Aorta (tissue), 5 donors: ENCODE measurements at regions of chr3 and their contacts with region 1.

Region 1: GRCh38 chr3:20039766-20040475 is at the start of gene KAT2B:
- DNase-seq: peak; percentile 88 to 92
- ATAC-seq: peak; percentile 89
- H3K4me3 ChIP-seq: peak within 1 kb of the TSS; percentile 72 to 91
- H3K27ac ChIP-seq: peak within 1 kb of the TSS; percentile 20 to 98
- H3K4me1 ChIP-seq: peaks cover 0 to 3% of the 10 kb centered on the region in 2 donors
- H3K27me3 ChIP-seq: no peaks in the 10 kb centered on the region
- total RNA-seq, gene KAT2B: 44.1 to 54.2 TPM

Region 2: DNA sequence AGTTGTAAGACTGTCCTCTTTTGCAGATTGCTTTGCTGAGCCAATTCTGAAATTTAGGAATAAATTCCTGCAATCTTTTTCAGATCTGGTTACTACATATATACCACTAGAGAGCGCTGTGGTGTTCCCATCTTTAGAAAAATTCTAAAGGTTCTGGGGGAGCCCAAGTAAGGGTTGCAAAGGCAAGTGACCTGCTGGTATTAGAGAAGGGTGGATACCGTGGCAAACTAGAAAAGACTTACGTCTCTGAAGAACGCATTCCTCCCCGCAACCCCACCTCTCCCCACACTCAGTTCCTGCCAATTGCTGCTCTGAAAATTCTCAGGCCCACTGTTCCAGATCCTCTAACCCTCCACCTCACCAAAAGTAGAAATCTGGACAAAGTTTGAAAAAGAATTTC is 154.5 kb before region 1 on chr3:
- intact Hi-C with region 1: loop called in 1 of 2 experiments (anchors 10 kb)
- DNase-seq: no peak
- ATAC-seq: no peak
- H3K4me3 ChIP-seq: no peak overlapping the region
- H3K27ac ChIP-seq: no peak overlapping the region
- H3K4me1 ChIP-seq: peaks cover 0 to 2% of the 10 kb centered on the region in 2 donors
- H3K27me3 ChIP-seq: no peaks in the 10 kb centered on the region

Region 3: DNA sequence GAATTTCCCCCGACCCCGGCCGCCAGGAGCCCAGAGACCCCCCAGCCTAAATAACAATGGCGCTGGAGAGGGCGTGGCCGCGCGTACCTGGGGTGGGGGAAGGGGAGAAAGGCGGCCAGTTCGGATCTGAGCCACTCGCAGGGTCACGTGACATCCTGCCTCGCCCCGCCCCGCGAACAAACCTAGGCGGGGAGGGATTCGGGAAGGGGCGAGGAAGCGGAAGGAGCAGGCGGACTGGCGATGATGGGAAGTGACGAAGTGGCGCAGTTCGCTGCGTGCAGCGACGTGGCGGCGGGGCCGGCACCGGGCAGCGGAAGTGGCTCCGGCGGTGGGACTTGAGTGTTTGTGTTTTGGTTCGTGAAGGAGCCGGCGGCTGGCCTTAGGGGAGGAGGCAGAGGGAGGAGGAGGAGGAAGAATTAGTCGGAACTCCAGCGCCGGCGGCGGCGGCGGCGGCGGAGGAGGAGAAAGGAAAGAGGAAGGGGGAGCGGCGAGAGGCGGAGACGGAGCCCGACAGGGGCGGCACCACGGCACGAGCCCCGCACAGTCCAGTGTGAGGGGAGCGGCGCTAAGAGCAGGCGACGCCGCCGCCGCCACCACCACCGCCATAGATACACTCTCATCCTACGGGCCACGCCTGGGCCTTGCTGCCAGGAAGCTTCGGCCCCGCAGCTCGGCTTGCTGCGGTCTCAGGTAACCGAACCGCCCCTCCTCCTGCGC is 92.9 kb before region 1 on chr3 and contains the start of gene RAB5A:
- intact Hi-C with region 1: loop called (anchors 2 to 10 kb)
- DNase-seq: peak; percentile 99
- ATAC-seq: peak; percentile 98
- H3K4me3 ChIP-seq: peak within 1 kb of the TSS; percentile 78 to 98
- H3K27ac ChIP-seq: peak within 1 kb of the TSS; percentile 83 to 98
- H3K4me1 ChIP-seq: peaks cover 2 to 4% of the 10 kb centered on the region in 2 donors
- H3K27me3 ChIP-seq: no peaks in the 10 kb centered on the region
- total RNA-seq, gene RAB5A: 75.9 to 80.3 TPM

Region 4: DNA sequence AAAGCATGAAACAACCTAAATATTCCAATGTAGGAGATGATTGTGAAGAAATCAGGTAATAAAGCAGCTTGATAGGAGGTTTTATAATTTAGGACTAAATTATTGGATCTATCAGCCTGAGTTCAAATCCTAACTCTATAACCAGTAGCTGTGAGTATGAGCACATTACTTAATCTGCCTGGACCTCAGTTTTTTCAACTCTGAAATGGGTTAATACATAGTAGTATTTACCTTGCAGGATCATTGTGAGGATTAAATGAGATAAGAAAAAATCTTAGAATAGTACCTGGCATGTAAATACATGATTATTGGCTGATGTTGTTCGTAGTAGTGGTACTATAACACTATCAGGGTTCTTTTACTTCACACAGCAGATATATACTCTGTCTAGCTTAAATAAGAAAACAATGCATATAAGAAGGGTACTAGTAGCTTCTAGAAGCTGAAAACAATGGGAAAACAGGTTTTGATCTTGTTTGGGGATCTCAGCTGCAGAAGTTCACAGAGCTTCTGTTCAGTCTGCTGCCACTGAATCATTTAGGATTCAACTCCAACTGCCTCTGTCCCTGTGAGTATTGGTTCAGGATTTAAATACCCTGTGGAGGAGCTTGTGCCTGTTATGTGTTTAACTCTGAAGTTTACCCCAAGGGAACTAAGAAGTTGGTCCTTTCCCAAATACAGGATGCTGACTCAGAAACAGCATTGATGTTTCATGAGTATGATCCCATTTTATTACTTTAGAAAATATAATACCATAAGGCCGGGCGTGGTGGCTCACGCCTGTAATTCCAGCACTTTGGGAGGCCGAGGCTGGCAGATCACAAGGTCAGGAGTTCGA is 34.5 kb after region 1 on chr3:
- intact Hi-C with region 1: no loop called
- DNase-seq: no peak
- ATAC-seq: no peak
- H3K4me3 ChIP-seq: no peak overlapping the region
- H3K27ac ChIP-seq: no peak overlapping the region
- H3K4me1 ChIP-seq: no peaks in the 10 kb centered on the region
- H3K27me3 ChIP-seq: no peaks in the 10 kb centered on the region

Region 5: DNA sequence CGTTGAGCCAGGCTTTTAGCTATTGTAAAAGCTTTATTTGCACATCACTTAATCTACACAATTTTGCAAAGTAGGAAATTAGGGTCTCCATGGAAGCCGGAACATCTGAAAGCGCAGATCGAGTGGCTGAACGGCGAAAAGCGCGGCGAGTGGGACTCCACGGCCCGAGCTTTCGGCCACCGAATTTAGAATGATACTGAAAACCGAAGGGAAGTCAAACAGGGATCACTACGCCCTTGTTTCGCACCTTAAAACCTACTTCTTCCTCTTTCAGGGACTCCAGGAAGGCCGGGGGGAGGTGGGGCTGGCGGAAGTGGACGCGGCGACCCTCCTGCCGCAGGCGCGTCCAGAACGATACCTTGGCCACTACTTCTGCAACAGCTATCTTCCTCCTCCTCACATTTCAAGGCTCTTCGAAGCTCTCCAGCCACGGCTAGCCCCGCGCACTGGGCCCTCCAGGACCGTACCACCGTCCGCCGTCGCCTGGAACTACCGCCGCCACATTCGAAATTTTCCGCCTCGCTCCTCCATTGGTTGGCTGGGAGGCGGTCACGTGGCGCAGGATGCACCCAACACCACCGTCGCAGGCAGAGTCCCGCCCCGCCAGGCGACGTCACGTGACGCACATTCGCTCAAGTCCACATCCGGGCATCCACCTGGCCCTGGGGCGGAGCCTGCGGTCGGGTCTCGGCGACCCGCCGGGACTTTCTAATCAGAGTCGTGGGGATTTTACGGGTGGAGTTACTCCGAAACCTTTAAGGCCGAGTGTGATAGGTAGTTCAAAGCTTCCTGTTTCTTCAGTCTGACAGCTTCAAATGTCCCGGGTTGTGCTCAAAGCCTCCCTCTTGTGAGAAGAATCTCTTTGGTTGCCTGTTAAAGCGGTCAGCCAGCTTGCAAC is 146.0 kb after region 1 on chr3 and contains the start of gene SGO1:
- intact Hi-C with region 1: loop called in 1 of 2 experiments (anchors 5 kb)
- DNase-seq: peak; percentile 100
- ATAC-seq: peak; percentile 100
- H3K4me3 ChIP-seq: peak within 1 kb of the TSS; percentile 64 to 90
- H3K27ac ChIP-seq: peak within 1 kb of the TSS; percentile 55 to 91
- H3K4me1 ChIP-seq: peaks cover 0 to 4% of the 10 kb centered on the region in 2 donors
- H3K27me3 ChIP-seq: no peaks in the 10 kb centered on the region
- total RNA-seq, gene SGO1: 0.81 TPM in 1 of 2 donors, not detected in the other